ENCODE measurements at regions of chr6 and their contacts with region 1.

Region 1: GRCh38 chr6:138001750-138002349 is 105.4 kb downstream of the PERP start:
- DNase-seq: peak in 1 of 2 donors; percentile 49
- ATAC-seq: peak; percentile 78
- H3K4me3 ChIP-seq: no peak overlapping the region
- H3K27ac ChIP-seq: no peak overlapping the region
- H3K4me1 ChIP-seq: no peaks in the 10 kb centered on the region
- H3K27me3 ChIP-seq: no peaks in the 10 kb centered on the region

Region 2: DNA sequence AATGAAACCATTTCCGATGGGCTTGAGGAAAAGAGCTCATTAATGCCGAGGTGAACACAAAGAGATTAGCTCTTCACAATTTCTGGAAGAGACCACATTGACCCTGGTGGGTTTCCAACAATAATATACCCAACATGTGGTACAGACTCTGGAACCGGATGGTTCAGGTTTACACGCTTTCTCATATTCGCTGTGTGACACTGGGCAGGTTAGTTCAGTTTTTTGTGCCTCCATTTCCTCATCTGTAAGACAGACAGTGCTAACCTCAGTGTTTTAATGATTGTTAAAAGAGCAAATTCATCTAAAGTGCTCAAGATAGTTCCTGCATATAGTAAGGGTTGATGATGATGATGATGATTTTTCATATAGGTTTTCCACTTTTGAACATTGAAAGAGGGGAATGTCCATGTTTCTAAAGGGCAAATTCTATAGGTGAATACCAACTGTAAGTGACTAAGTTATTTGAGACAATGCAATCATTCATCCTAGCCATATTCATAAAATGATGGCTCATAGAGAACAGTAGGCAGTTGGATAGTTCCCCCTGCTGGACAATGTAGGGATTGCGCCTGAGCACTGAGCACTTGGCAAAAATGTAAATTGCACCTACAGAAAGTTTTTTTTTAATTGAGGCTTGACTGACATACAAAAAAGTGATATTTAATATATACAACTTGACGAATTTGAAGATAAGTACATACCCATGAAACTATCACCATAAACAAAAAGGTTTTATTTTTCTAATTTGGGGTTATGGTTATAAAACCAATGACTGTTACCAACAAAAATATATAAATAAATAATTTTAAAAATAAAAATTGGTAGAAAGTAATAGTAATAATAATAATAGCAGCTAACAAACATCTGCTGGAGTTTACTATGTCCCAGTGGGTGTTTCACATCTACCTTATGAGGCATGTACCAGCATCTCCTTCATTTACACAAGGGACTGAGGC is 107.5 kb after region 1 on chr6:
- intact Hi-C with region 1: loop called (anchors 2 kb)
- DNase-seq: peak; percentile 70 to 78
- ATAC-seq: peak; percentile 87
- H3K4me3 ChIP-seq: no peak overlapping the region
- H3K27ac ChIP-seq: no peak overlapping the region
- H3K4me1 ChIP-seq: no peaks in the 10 kb centered on the region
- H3K27me3 ChIP-seq: no peaks in the 10 kb centered on the region

Measured in aorta (tissue), 5 donors.